A549 (cell line): ENCODE measurements at regions of chr5 and their contacts with region 1.

Region 1: GRCh38 chr5:65481635-65482295 is at the start of gene ADAMTS6:
- DNase-seq: peak; percentile 47 to 68
- ATAC-seq: peak; percentile 87
- H3K4me3 ChIP-seq: peak within 1 kb of the TSS; percentile 65
- H3K27ac ChIP-seq: peak within 1 kb of the TSS; percentile 42 to 78; a peak in 5 of 6 replicates
- H3K4me1 ChIP-seq: peaks cover 22% of the 10 kb centered on the region; the same call in 2 of the 3 replicates
- CTCF ChIP-seq: no peak
- EP300 ChIP-seq: no peak; a peak in 1 of 5 replicates
- POLR2A ChIP-seq: no peak
- RAD21 ChIP-seq: no peak
- polyA plus RNA-seq, gene ADAMTS6: 0.66 and 0.69 TPM in 2 replicates

Region 2: DNA sequence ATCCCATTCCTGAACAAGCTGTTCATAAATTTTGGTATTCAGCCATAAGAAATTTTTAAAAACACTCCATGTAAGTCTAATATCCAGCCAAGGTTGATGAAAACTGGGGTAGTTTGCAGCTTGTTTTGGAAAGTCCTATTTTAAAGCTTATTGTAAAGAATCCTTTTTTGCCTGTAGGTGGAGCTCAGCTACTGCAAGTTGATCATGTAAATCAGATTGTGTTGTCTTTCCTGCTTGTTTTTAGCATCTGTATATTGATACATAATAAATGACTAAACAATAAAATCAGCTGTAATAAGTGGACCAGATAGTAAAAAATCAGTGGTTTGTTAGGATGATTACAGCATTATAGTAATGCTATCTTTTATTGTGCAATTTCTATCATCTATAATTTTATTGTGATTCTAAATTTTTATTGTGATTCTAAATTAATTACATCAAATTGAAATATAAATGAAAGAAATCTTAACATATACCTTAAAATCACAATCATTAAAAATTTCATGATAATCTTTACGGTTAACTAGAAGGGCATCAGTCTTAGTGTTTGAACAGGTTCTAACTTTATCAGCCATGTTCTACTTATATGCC is 670.6 kb before region 1 on chr5:
- CTCF ChIA-PET with region 1: interaction called, 41 read pairs
- POLR2A ChIA-PET with region 1: interaction called, 4 read pairs
- DNase-seq: peak; percentile 17 to 61
- ATAC-seq: peak; percentile 47 to 64; a peak in 3 of 6 replicates
- H3K4me3 ChIP-seq: no peak overlapping the region
- H3K27ac ChIP-seq: no peak overlapping the region
- H3K4me1 ChIP-seq: no peaks in the 10 kb centered on the region
- CTCF ChIP-seq: peak; percentile 85
- EP300 ChIP-seq: no peak
- POLR2A ChIP-seq: no peak
- RAD21 ChIP-seq: peak; percentile 86 to 88

Region 3: DNA sequence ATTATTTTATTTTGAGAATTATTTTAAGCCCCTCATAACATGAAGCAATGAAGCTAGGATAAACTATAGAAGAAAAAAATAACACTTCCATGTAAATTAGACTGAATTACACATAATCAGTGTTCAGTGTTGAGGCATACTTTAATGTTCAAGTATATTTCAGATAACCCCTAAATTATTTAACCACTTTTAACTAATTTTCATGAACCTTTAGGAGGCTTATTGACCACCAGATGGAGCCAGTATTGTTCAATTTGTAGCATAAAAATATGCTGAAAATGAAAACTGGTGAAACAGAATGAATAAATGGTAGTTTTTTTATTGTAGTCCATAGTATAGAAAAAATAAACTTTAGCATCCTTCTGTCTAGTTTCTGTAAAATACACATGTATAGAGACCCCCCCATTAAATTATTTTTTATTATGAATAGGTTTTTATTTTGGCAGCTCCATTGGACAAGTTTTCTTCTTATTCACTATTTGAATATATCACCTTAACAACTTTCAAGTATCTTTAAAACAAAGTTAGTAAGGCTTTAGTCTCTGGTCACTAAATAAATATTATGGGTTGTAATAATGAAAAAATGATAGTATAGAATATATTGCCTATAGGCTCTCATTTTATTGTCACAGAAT is 522.9 kb before region 1 on chr5:
- CTCF ChIA-PET with region 1: interaction called, 14 read pairs
- POLR2A ChIA-PET with region 1: no interaction called
- DNase-seq: peak in 1 of 2 experiments; percentile 35
- ATAC-seq: 0 out of 6 replicates have a peak, but pooled peaks of 1 of the 2 experiments have one; percentile 31
- H3K4me3 ChIP-seq: no peak overlapping the region
- H3K27ac ChIP-seq: no peak overlapping the region
- H3K4me1 ChIP-seq: no peaks in the 10 kb centered on the region
- CTCF ChIP-seq: peak; percentile 70
- EP300 ChIP-seq: no peak
- POLR2A ChIP-seq: no peak
- RAD21 ChIP-seq: peak; percentile 62 to 76

Region 4: GRCh38 chr5:65102828-65103711 is 378.7 kb before region 1 on chr5:
- CTCF ChIA-PET with region 1: interaction called, 13 read pairs
- POLR2A ChIA-PET with region 1: interaction called, 22 read pairs
- DNase-seq: peak; percentile 62 to 69
- ATAC-seq: peak; percentile 81 to 90
- H3K4me3 ChIP-seq: peak overlapping the region; percentile 57
- H3K27ac ChIP-seq: peak overlapping the region; percentile 80 to 92
- H3K4me1 ChIP-seq: peaks cover 3% of the 10 kb centered on the region; the same call in 1 of the 3 replicates
- CTCF ChIP-seq: peak; percentile 25; the same call in 2 of the 3 replicates
- EP300 ChIP-seq: no peak
- POLR2A ChIP-seq: peak; percentile 60
- RAD21 ChIP-seq: peak; percentile 11 to 47; a peak in 2 of 5 replicates

Region 5: DNA sequence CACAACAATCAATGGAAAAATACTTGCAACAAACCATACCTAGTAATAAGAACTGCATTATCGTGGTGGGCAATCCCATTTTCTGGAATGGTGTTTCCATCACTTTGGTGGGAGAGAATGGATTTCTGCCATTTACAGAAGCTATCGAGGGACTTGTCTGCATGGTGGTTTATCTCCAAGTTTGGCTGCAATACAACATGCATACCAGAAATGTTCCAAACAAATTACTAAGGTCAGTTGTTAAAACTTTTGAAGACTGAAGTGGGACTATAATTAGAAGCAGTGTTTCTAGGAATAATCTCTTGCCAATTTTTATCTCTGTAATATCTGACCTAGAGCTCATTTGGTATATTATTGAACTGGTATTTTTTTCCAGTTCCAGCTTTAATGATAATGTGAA is 30.3 kb before region 1 on chr5:
- CTCF ChIA-PET with region 1: no interaction called
- POLR2A ChIA-PET with region 1: no interaction called
- DNase-seq: no peak
- ATAC-seq: no peak
- H3K4me3 ChIP-seq: no peak overlapping the region
- H3K27ac ChIP-seq: no peak overlapping the region
- H3K4me1 ChIP-seq: no peaks in the 10 kb centered on the region
- CTCF ChIP-seq: no peak
- EP300 ChIP-seq: no peak
- POLR2A ChIP-seq: no peak
- RAD21 ChIP-seq: no peak